Natural killer cell (primary cell): ENCODE measurements at regions of chr21 and their contacts with region 1.

Region 1: GRCh38 chr21:44657635-44658540 is at the start of gene KRTAP12-3:
- DNase-seq: peak; percentile 49 to 90
- ATAC-seq: peak; percentile 76 to 86 (median 77)
- H3K4me3 ChIP-seq: no peak within 1 kb of the TSS
- H3K4me3 Mint-ChIP-seq: peak within 1 kb of the TSS; percentile 74
- H3K27ac ChIP-seq: peak within 1 kb of the TSS; percentile 81
- H3K27ac Mint-ChIP-seq: peak within 1 kb of the TSS; percentile 89 to 94
- H3K4me1 ChIP-seq: peaks cover 57% of the 10 kb centered on the region
- H3K4me1 Mint-ChIP-seq: peaks cover 55 to 56% of the 10 kb centered on the region in 2 donors
- H3K27me3 ChIP-seq: no peaks in the 10 kb centered on the region
- H3K27me3 Mint-ChIP-seq: peaks cover 5 to 7% of the 10 kb centered on the region in 2 donors
- CTCF ChIP-seq: no peak
- total RNA-seq, gene KRTAP12-3: 1.0 to 1.1 TPM in 2 of 3 donors, not detected in the other

Region 2: GRCh38 chr21:44618504-44618903 is 39.4 kb before region 1 on chr21:
- intact Hi-C with region 1: loop called (anchors 2 kb)
- DNase-seq: peak in 1 of 2 donors; percentile 50
- ATAC-seq: peak; percentile 14 to 69 (median 53)
- H3K4me3 ChIP-seq: no peak overlapping the region
- H3K4me3 Mint-ChIP-seq: peak overlapping the region; percentile 67
- H3K27ac ChIP-seq: peak overlapping the region; percentile 79
- H3K27ac Mint-ChIP-seq: peak overlapping the region; percentile 88 to 95
- H3K4me1 ChIP-seq: peaks cover 22% of the 10 kb centered on the region
- H3K4me1 Mint-ChIP-seq: peaks cover 29 to 36% of the 10 kb centered on the region in 2 donors
- H3K27me3 ChIP-seq: no peaks in the 10 kb centered on the region
- H3K27me3 Mint-ChIP-seq: no peaks in the 10 kb centered on the region
- CTCF ChIP-seq: no peak

Region 3: GRCh38 chr21:44626262-44626661 is 31.6 kb before region 1 on chr21:
- intact Hi-C with region 1: loop called (anchors 2 kb)
- DNase-seq: peak; percentile 65 to 66
- ATAC-seq: peak; percentile 86 to 99 (median 95)
- H3K4me3 ChIP-seq: no peak overlapping the region
- H3K4me3 Mint-ChIP-seq: peak overlapping the region; percentile 71
- H3K27ac ChIP-seq: peak overlapping the region; percentile 8
- H3K27ac Mint-ChIP-seq: peak overlapping the region; percentile 74 to 86
- H3K4me1 ChIP-seq: peaks cover 56% of the 10 kb centered on the region
- H3K4me1 Mint-ChIP-seq: peaks cover 43 to 59% of the 10 kb centered on the region in 2 donors
- H3K27me3 ChIP-seq: no peaks in the 10 kb centered on the region
- H3K27me3 Mint-ChIP-seq: peaks cover 0 to 3% of the 10 kb centered on the region in 2 donors
- CTCF ChIP-seq: no peak